ENCODE measurements at regions of chr19 and their contacts with region 1.

Region 1: DNA sequence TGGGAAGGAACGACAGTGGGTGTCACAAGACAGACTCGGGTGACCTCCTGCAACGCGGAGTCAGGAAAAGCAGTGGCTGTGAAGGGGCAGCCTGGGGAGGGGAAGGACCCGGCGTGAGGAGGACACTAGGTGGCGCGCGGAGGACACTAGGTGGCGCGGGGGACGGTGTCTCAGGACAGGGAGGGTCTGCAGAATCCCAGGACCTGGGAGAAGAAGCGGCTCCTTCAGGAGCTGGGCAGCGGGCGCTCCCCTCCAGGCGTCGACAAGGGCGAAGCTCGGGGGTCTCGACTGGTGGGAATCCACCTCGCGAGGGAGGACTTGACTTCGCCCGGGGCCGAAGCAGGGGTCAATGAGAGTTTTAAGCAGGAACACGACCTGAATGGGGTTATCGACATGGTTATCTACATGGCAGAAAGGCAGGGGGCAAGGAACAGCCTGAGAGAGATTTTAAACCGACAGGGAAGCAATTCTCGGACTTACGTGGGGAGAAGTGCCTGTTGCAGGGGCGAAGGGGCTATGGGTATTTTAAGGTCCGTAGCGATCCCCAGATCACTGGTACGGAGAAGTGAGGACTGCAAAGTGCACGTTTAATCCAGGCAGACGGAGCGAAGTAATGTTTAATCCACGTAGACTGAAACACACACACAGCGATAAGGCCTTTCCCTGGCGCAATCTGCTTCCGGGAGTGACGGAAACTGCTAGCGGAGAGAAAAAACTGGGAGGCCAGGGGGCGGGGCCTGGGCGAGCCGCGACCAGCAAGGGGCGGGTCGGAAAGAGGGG is at the start of gene ZNF616:
- DNase-seq: peak; percentile 74
- ATAC-seq: peak; percentile 59
- H3K4me3 Mint-ChIP-seq: peak within 1 kb of the TSS; percentile 97
- H3K27ac Mint-ChIP-seq: peak within 1 kb of the TSS; percentile 93
- H3K4me1 Mint-ChIP-seq: peaks cover 25% of the 10 kb centered on the region
- H3K27me3 Mint-ChIP-seq: no peaks in the 10 kb centered on the region
- CTCF ChIP-seq: no peak
- total RNA-seq, gene ZNF616: 7.3 and 7.4 TPM in 2 replicates

Region 2: GRCh38 chr19:51948975-51949374 is 190.5 kb before region 1 on chr19:
- CTCF ChIA-PET with region 1: no interaction called
- POLR2A ChIA-PET with region 1: no interaction called
- intact Hi-C with region 1: no loop called
- DNase-seq: no peak
- ATAC-seq: no peak
- H3K4me3 Mint-ChIP-seq: no peak overlapping the region
- H3K27ac Mint-ChIP-seq: no peak overlapping the region
- H3K4me1 Mint-ChIP-seq: no peaks in the 10 kb centered on the region
- H3K27me3 Mint-ChIP-seq: no peaks in the 10 kb centered on the region
- CTCF ChIP-seq: no peak

Region 3: DNA sequence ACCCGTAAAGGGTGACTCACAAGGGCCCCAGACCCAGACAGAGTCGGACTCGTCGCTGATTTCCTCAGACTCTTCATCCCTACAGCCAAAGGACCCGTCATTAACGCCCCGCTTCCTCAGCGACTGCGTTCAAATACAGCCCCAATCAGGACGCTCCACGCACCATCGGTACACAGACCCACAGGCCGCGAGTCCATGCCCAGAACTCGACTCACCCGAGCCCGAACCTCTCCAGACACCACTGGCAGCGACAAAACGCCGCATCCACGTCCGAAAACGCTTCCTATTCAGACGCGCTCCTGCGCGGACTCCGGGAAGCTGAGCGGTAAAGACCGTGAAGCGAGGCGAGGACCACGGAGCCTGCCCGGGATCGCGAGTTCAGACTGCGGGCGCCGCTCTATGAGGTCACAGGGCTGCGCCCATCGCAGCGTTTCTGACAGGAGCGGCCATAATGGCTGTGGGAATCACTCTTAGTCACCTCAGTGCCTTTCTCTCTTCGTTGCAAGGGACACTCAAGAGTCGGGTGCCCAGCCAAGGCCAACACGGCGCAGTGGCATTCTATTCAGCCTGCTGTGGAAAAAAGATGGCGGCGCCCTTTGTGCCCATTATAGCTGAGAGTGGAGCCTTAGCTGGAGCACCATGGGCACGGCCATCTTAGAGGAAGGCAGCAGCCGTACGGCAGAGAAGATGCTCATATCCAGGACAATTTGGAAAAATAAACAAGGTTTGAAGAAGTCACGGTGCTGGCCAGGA is 111.2 kb before region 1 on chr19 and contains the start of gene ZNF614:
- CTCF ChIA-PET with region 1: no interaction called
- POLR2A ChIA-PET with region 1: no interaction called
- intact Hi-C with region 1: no loop called
- DNase-seq: peak; percentile 86
- ATAC-seq: peak; percentile 89
- H3K4me3 Mint-ChIP-seq: peak within 1 kb of the TSS; percentile 98
- H3K27ac Mint-ChIP-seq: peak within 1 kb of the TSS; percentile 93
- H3K4me1 Mint-ChIP-seq: peaks cover 29% of the 10 kb centered on the region
- H3K27me3 Mint-ChIP-seq: no peaks in the 10 kb centered on the region
- CTCF ChIP-seq: no peak
- total RNA-seq, gene ZNF614: 14.0 and 14.3 TPM in 2 replicates

Region 4: DNA sequence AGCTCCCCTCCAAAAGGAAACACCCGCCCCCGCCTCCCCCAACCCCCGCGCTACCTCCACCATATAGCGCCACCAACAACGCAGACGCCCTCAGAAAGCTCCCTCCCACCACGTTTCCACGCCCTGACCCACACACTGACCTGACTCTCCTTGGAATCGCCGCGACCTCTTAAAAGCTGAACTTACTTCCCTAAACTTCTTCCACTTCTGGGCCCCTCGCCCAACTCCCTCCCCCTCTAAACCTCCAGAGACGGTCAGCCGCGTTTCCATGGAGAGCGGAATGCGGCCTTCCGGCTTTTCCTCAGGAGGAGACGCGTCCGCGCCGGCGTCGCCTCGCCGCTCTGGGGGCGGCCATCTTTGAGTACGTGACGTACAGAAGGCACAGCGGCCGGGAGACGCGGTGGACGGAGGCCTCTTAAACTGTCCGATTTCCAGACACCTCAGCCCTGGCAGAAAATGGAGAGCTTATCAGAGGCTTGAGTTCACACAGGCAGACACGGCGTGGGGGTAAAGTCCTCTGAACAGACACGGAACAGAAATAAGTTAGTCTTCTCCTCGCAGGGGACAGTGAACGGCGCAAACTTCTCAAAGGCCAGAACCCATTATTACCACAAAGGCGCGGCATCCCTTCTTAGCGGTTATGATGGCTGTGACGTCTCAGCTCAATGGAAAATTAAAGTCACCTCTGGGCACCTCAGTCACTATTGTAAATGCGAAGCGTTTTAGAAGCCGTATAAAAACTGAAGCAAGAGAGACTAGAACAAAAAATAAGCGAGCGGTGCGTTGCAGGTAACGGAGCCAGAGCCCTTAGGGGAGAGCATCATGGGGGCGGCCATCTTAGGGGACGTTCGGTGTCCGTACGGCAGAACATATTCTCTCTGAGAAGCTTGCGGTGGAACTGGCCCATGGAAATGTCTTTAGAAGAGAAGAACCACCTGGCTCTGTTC is 90.6 kb before region 1 on chr19 and contains the start of gene ZNF432:
- CTCF ChIA-PET with region 1: no interaction called
- POLR2A ChIA-PET with region 1: interaction called, 3 read pairs
- intact Hi-C with region 1: loop called (anchors 2 kb)
- DNase-seq: peak; percentile 82
- ATAC-seq: peak; percentile 88
- H3K4me3 Mint-ChIP-seq: peak within 1 kb of the TSS; percentile 100
- H3K27ac Mint-ChIP-seq: peak within 1 kb of the TSS; percentile 99
- H3K4me1 Mint-ChIP-seq: peaks cover 19% of the 10 kb centered on the region
- H3K27me3 Mint-ChIP-seq: no peaks in the 10 kb centered on the region
- CTCF ChIP-seq: no peak
- total RNA-seq, gene ZNF432: 18.1 and 18.4 TPM in 2 replicates

Region 5: GRCh38 chr19:52095172-52096014 is 44.0 kb before region 1 on chr19 and contains the start of gene ZNF841:
- CTCF ChIA-PET with region 1: no interaction called
- POLR2A ChIA-PET with region 1: no interaction called
- intact Hi-C with region 1: loop called (anchors 2 kb)
- DNase-seq: peak; percentile 86
- ATAC-seq: peak; percentile 98
- H3K4me3 Mint-ChIP-seq: peak within 1 kb of the TSS; percentile 98
- H3K27ac Mint-ChIP-seq: peak within 1 kb of the TSS; percentile 94
- H3K4me1 Mint-ChIP-seq: peaks cover 30% of the 10 kb centered on the region
- H3K27me3 Mint-ChIP-seq: no peaks in the 10 kb centered on the region
- CTCF ChIP-seq: no peak
- total RNA-seq, gene ZNF841: 34.7 and 42.7 TPM in 2 replicates

Region 6: GRCh38 chr19:52171321-52172169 is 32.1 kb after region 1 on chr19 and contains the start of gene ZNF836:
- CTCF ChIA-PET with region 1: no interaction called
- POLR2A ChIA-PET with region 1: interaction called, 5 read pairs
- intact Hi-C with region 1: loop called (anchors 1 kb)
- DNase-seq: peak; percentile 80
- ATAC-seq: peak; percentile 97
- H3K4me3 Mint-ChIP-seq: peak within 1 kb of the TSS; percentile 97
- H3K27ac Mint-ChIP-seq: peak within 1 kb of the TSS; percentile 96
- H3K4me1 Mint-ChIP-seq: peaks cover 27% of the 10 kb centered on the region
- H3K27me3 Mint-ChIP-seq: no peaks in the 10 kb centered on the region
- CTCF ChIP-seq: no peak
- total RNA-seq, gene ZNF836: 27.4 and 28.0 TPM in 2 replicates

Region 7: GRCh38 chr19:52237771-52238400 is 98.4 kb after region 1 on chr19:
- CTCF ChIA-PET with region 1: interaction called, 55 read pairs
- POLR2A ChIA-PET with region 1: interaction called, 3 read pairs
- intact Hi-C with region 1: loop called (anchors 1 kb)
- DNase-seq: peak; percentile 28
- ATAC-seq: peak; percentile 81
- H3K4me3 Mint-ChIP-seq: no peak overlapping the region
- H3K27ac Mint-ChIP-seq: no peak overlapping the region
- H3K4me1 Mint-ChIP-seq: no peaks in the 10 kb centered on the region
- H3K27me3 Mint-ChIP-seq: no peaks in the 10 kb centered on the region
- CTCF ChIP-seq: peak; percentile 61

Region 8: DNA sequence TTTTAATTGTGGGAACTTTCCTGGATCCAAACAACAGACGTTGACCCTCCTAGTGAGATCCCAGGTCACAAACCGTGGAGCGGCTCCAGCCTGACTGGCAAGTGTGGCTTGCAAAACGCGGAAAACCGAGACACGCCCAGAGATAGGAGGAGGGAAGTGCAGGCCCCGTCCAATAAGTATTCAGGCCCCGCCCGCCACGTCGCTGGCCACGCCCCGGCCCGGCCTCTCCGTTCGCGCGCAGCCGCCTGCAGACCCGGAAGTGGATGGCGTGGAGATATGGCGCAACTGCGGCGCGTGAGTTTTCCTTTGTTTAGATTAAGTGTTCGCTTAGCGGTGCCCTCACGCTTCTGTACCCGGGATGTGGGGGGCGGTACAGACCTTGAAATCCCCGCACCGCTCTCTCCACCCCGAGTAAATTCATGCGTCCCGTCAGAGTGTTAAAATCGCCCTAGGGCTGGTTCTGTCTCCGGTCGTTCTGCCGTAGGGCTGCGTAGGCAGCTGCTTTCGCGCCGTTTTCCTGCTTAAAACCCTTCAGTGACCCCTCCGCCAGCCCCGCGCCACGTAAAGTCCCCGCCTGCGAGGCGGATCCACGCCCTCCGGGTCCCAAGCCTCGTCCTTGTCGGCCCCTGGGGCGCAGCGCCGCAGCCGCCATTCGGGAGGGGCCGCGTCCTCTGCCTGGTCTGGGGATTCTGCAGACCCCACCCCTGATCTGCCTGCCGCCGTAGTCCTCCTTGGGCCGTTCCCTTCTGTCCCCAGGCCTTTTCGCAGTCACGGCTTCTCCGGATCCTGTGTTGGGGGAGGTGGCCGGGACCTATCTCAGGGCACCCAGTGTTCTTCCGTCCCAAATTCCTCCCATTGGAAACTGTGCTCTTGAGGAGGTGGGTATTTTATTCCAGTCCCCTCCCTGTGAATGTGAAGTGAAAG is 130.2 kb after region 1 on chr19 and contains the start of gene ZNF766:
- CTCF ChIA-PET with region 1: no interaction called
- POLR2A ChIA-PET with region 1: no interaction called
- intact Hi-C with region 1: loop called (anchors 1 kb)
- DNase-seq: peak; percentile 98
- ATAC-seq: peak; percentile 97
- H3K4me3 Mint-ChIP-seq: peak within 1 kb of the TSS; percentile 98
- H3K27ac Mint-ChIP-seq: peak within 1 kb of the TSS; percentile 94
- H3K4me1 Mint-ChIP-seq: peaks cover 45% of the 10 kb centered on the region
- H3K27me3 Mint-ChIP-seq: no peaks in the 10 kb centered on the region
- CTCF ChIP-seq: no peak
- total RNA-seq, gene ZNF766: 33.0 and 35.0 TPM in 2 replicates

Region 9: GRCh38 chr19:52748336-52748950 is 609.0 kb after region 1 on chr19:
- CTCF ChIA-PET with region 1: interaction called, 3 read pairs
- POLR2A ChIA-PET with region 1: no interaction called
- intact Hi-C with region 1: loop called (anchors 5 kb)
- DNase-seq: no peak
- ATAC-seq: peak; percentile 50
- H3K4me3 Mint-ChIP-seq: no peak overlapping the region
- H3K27ac Mint-ChIP-seq: no peak overlapping the region
- H3K4me1 Mint-ChIP-seq: no peaks in the 10 kb centered on the region
- H3K27me3 Mint-ChIP-seq: no peaks in the 10 kb centered on the region
- CTCF ChIP-seq: no peak